ENCODE measurements at regions of chr15 and their contacts with region 1.

Region 1: GRCh38 chr15:79380755-79381497 is 51.2 kb upstream of the MINAR1 start:
- DNase-seq: peak; percentile 78
- ATAC-seq: peak; percentile 89
- H3K4me3 ChIP-seq: no peak overlapping the region
- H3K27ac ChIP-seq: no peak overlapping the region
- H3K4me1 ChIP-seq: no peaks in the 10 kb centered on the region
- H3K27me3 ChIP-seq: no peaks in the 10 kb centered on the region
- CTCF ChIP-seq: peak; percentile 91

Region 2: DNA sequence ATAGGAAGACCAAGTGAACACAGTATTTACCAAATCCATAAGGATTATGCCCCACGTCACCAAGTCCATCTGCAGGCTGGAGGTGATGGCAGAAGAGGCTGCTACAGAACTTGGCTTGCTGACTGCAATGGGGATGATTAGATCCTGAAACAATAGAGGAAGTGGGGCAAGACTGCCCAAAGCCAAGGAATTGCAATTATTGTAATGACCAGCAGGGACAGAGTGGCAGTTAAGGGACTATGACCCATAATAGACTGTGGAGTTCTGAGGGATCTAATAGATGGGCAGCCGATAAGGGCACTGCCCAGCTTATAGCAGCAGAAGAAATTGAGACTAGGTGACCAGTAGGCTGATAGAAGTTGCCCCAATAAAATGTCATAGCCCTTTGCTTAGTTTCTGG is 159.6 kb after region 1 on chr15:
- intact Hi-C with region 1: no loop called
- DNase-seq: no peak
- ATAC-seq: peak; percentile 66
- H3K4me3 ChIP-seq: no peak overlapping the region
- H3K27ac ChIP-seq: no peak overlapping the region
- H3K4me1 ChIP-seq: no peaks in the 10 kb centered on the region
- H3K27me3 ChIP-seq: no peaks in the 10 kb centered on the region
- CTCF ChIP-seq: no peak

Region 3: GRCh38 chr15:79853458-79854328 is 472.8 kb after region 1 on chr15:
- intact Hi-C with region 1: loop called (anchors 10 kb)
- DNase-seq: no peak
- ATAC-seq: peak; percentile 98
- H3K4me3 ChIP-seq: no peak overlapping the region
- H3K27ac ChIP-seq: no peak overlapping the region
- H3K4me1 ChIP-seq: no peaks in the 10 kb centered on the region
- H3K27me3 ChIP-seq: no peaks in the 10 kb centered on the region
- CTCF ChIP-seq: peak; percentile 95

Measured in upper lobe of right lung (tissue), 1 donor.